BJ (cell line): ENCODE measurements at regions of chr10 and their contacts with region 1.

Region 1: DNA sequence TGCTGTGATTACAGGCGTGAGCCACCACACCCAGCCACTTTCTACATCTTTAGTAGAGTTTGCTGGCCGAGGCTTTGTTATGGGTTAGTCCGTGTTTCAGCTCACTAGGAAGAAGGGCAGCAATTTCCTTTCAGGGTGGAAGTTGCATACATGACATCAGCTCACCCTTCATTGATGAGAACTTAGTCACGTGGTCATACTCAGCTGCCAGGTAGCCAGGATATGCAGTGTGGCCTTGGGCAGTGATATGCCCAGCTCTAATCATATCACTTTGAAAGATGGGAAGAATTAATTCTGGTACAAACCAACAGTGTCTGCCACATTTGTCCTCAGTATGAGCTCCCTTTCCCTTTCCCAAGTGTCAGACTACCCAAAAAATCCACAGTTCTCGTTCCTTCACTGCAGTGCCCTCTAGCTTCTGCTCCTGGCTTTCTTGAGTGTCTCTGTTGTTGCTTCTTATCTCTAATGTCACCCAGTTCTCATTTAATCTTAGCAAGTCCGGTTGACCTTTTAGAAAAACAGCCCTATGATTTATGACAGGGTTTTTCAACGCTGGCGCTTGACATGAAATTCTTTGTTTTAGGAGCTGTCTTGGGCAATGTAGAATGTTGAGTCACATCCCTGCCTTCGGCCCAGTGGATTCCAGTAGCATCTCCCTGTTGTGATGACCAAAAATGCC is 108.7 kb upstream of the ITGB1 start:
- DNase-seq: peak; percentile 65
- H3K4me3 ChIP-seq: no peak overlapping the region
- H3K27me3 ChIP-seq: 0 out of 2 replicates have a peak, but pooled peaks cover 3% of the 10 kb centered on the region
- CTCF ChIP-seq: peak; percentile 47

Region 2: DNA sequence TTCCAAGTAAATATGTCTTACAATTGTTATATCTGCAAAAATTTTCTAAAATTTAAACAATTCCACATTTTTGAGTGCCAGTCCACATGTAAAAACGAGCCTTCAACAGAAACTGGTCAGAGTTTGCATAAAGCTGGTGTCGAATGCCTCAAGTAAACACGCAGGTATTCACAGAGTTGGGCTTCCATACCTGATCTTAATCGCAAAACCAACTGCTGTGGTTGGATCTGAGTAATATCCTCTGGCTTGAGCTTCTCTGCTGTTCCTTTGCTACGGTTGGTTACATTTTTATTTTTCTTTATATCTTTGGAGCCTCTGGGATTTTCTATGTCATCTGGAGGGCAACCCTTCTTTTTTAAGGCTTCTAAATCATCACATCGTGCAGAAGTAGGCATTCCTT is 137.1 kb before region 1 on chr10:
- CTCF ChIA-PET with region 1: no interaction called
- POLR2A ChIA-PET with region 1: interaction called, 23 read pairs
- DNase-seq: no peak
- H3K4me3 ChIP-seq: no peak overlapping the region
- H3K27me3 ChIP-seq: no peaks in the 10 kb centered on the region
- CTCF ChIP-seq: no peak

Region 3: DNA sequence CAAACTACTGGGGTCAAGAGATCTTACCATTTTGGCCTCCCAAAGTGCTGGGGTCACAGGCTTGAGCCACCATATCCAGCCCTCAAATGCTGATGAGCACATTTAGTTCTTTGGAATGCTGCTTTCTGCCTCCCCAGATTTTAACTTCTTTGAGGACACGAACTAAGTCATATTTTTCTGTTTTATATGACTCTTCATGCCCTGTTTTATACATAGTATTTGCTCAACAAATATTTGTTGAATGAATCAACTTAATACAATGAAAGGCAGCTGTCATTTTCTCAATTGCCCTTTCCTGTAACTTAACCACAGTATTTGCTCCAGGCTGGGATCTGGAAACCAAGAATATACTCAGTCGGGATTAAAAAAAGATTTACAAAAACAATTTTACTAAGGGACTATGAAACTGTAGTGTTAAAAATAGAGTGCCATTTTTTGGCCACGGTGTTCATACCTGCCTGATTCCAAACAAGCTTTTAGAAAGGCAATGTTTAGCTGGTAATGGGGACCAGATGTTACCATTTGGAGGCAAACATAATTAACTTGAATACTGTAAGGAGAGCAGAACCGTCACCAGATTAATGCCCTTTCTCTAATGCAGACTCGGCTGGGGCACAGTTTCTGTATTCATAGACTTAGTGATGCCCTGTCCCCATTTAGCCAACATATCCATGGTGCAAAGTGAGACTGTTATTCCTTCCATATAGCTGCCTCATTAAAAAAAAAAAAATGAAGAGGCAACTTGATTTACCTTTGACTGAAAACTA is 150.1 kb after region 1 on chr10:
- CTCF ChIA-PET with region 1: no interaction called
- POLR2A ChIA-PET with region 1: interaction called, 10 read pairs
- DNase-seq: peak; percentile 85
- H3K4me3 ChIP-seq: no peak overlapping the region
- H3K27me3 ChIP-seq: no peaks in the 10 kb centered on the region
- CTCF ChIP-seq: no peak

Region 4: GRCh38 chr10:33330543-33331378 is 264.1 kb after region 1 on chr10:
- CTCF ChIA-PET with region 1: no interaction called
- POLR2A ChIA-PET with region 1: interaction called, 12 read pairs
- DNase-seq: no peak
- H3K4me3 ChIP-seq: peak overlapping the region; percentile 95
- H3K27me3 ChIP-seq: no peaks in the 10 kb centered on the region
- CTCF ChIP-seq: peak; percentile 89